Heart right ventricle (tissue), 16 donors: ENCODE measurements at regions of chr2 and their contacts with region 1.

Region 1: DNA sequence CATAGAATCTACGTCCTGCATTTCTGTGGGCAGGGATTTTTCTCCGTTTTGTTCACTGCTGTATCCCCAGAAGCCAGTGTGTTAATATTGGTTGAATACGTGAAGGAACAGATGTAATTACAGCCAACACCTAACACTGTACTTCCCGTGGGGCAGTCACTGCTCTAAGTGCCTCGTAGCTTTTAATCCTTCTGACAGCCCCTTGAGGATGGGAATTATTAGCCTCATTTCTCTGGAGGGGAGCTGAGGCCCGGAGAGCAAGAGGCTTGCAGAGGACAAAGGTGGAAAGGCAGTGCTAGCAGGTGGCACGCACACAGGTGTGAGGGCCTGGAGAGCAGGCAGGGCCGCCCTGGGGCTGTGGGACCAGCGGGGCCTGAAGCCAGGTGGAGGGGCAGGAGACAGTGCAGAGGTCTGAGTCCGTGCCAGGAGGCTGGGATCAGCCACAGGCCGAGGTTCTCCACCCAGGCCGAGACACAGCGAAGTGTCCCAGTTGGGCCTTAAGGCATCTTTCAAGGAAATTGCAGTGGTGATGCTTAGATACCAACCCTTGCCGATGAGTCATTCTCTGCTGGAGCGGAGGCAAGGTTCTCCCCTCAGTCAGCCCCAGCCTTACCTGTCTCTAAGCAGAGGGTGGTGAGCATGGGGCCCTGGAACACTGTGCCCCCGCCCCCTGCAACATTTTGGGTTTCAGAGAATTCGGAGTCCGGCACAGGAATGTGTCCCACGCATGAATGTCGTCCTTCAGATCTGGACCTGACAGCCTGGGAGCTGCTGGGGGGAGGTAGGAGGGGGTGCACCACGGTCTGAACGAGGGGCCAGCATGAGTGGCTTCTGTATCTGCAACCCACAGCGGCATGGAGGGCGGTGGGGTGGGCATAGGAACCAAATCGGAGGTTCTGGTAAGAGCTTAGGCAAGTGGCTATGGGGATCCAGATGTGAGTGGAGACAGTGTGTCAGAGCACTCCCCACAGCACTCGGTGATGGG is 122.6 kb downstream of the GBX2 start:
- DNase-seq: no peak
- ATAC-seq: no peak
- H3K4me3 ChIP-seq: no peak overlapping the region
- H3K27ac ChIP-seq: no peak overlapping the region
- H3K4me1 ChIP-seq: no peaks in the 10 kb centered on the region
- H3K27me3 ChIP-seq: no peaks in the 10 kb centered on the region
- CTCF ChIP-seq: no peak

Region 2: DNA sequence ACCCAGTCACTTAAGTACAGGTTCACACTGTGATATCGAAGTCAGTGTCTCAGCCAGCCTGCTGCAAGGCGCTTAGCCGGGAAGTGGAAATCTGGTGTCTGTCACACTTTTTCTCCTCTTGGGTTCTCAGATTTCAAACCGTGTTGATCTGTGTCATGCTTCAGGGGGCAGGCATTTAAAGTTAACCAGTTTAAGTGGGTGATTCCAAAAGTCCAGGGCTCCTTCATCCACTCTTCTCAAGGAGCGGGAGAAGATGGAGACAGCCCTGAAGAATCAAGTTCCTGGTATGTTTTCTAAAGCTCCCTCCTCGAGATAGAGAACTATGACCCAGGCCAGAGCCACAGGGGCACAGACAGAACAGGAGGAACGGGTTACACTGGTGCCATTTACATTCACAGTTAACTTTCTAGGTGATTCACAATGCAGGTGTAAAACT is 209.0 kb before region 1 on chr2:
- intact Hi-C with region 1: loop called in 1 of 10 experiments (anchors 10 kb)
- DNase-seq: no peak
- ATAC-seq: no peak
- H3K4me3 ChIP-seq: no peak overlapping the region
- H3K27ac ChIP-seq: no peak overlapping the region
- H3K4me1 ChIP-seq: no peaks in the 10 kb centered on the region
- H3K27me3 ChIP-seq: no peaks in the 10 kb centered on the region
- CTCF ChIP-seq: no peak